Activated CD8-positive, alpha-beta T cell treated with anti-CD3 and anti-CD28 coated beads, Interleukin-2, amount 10 ng/mL, durations not matched to agents 7 days and 5 days (primary cell): ENCODE measurements at regions of chr17 and their contacts with region 1.

Region 1: DNA sequence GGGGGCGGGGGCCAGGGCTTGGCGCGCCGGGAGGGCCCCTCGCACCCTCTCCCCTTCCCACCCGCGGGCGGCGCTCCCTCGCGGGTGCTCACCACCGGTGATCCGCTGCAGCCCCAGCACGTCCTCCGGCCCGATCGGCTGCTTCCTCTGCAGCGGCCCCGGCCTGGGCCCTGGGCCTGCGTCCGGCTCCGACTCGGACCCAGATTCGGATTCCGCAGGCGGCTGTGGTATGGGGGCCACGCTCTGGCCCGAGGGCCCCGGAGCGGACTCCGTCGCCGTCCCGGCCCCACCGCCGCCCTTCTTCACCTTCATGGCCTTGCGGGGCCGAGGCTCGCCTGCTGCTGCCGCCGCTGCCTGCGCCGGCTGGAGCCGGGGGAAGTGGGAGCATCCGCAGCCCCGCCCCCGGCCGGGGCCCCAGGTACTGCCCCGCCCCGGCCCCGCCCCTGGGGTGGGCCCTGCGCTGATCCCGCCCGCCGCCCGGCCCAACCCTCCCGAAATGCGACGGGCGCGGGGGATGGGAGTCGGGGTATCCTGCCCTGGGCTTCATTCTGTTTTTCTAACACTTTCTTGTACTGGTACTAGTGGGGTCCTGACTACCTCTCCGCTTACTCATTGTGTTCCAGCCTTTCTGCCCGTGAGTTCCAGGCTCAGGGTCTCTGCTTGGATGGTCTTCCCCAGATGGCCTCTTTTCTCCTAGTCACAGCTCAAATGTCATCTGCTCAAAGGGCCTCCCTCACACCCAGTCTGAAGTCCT is at the start of gene UNC119:
- DNase-seq: peak; percentile 82
- ATAC-seq: peak; percentile 85
- H3K4me3 Mint-ChIP-seq: peak within 1 kb of the TSS; percentile 91
- H3K27ac Mint-ChIP-seq: peak within 1 kb of the TSS; percentile 90
- H3K4me1 Mint-ChIP-seq: peaks cover 48% of the 10 kb centered on the region
- H3K27me3 Mint-ChIP-seq: no peaks in the 10 kb centered on the region
- total RNA-seq, gene UNC119: 41.6 to 48.1 TPM

Region 2: DNA sequence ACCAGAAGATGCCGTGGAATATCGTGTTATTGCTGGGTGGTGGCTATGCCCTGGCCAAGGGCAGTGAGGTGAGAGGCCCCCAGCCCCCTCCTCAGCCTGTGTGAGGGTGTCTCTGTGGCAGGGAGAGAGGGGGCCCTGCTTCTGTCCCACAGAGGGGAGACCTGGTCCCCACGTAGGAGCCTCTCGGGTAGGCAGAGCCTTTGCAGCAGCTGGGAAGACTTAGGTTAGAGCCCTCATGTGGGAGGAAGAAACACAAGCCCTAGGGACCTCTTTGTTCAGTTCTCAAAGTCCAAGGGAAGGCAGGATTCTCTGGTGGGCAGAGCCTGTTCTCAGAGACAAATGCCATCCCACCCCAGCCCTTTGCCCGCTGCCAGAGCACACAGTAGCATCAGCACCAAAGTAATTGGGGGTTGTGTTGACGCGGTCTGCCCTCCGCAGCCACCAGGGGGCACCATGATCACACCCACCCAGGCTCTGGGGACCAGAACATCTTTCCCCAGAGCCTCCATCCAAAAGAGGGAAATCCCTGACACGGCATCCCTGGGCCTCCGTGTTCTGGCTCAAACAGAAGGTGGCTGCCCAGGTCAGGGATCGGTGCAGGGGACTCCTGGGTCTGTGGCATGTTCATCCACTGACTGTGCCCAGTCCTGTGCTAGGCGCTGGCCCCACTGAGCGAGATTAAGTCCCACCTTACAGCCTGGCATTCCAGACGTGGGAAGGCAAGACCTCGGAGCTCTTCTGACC is 57.8 kb before region 1 on chr17:
- CTCF ChIA-PET with region 1: interaction called, 16 read pairs
- POLR2A ChIA-PET with region 1: no interaction called
- DNase-seq: peak; percentile 83
- ATAC-seq: peak; percentile 89
- H3K4me3 Mint-ChIP-seq: no peak overlapping the region
- H3K27ac Mint-ChIP-seq: no peak overlapping the region
- H3K4me1 Mint-ChIP-seq: no peaks in the 10 kb centered on the region
- H3K27me3 Mint-ChIP-seq: peaks cover 2% of the 10 kb centered on the region

Region 3: DNA sequence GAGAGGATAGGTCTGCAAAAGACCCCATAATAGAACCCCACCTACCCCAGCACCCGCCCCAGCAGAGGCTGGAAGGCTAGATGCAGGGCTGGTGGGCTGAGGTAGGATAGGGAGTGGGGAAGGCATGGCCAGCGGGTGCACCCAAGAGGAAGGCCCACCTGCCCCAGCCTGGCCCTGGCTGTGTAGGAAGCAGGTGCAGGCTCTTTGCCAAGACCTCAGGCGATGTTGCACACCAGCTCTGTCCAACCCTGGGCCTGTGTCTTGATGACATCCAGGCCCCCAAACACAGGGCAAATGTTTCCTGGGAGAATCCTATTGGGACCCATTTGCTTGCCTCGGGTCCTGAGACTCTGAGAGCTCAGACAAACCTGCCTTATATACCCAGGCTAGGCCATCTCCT is 12.2 kb before region 1 on chr17:
- CTCF ChIA-PET with region 1: interaction called, 21 read pairs
- POLR2A ChIA-PET with region 1: interaction called, 3 read pairs
- DNase-seq: no peak
- ATAC-seq: no peak
- H3K4me3 Mint-ChIP-seq: no peak overlapping the region
- H3K27ac Mint-ChIP-seq: no peak overlapping the region
- H3K4me1 Mint-ChIP-seq: no peaks in the 10 kb centered on the region
- H3K27me3 Mint-ChIP-seq: no peaks in the 10 kb centered on the region

Region 4: GRCh38 chr17:28571255-28572122 is 19.1 kb after region 1 on chr17 and contains the start of gene PIGS:
- CTCF ChIA-PET with region 1: interaction called, 46 read pairs
- POLR2A ChIA-PET with region 1: interaction called, 30 read pairs
- DNase-seq: peak; percentile 94
- ATAC-seq: peak; percentile 98
- H3K4me3 Mint-ChIP-seq: peak within 1 kb of the TSS; percentile 94
- H3K27ac Mint-ChIP-seq: peak within 1 kb of the TSS; percentile 95
- H3K4me1 Mint-ChIP-seq: peaks cover 58% of the 10 kb centered on the region
- H3K27me3 Mint-ChIP-seq: no peaks in the 10 kb centered on the region
- total RNA-seq, gene PIGS: 60.0 to 61.1 TPM

Region 5: GRCh38 chr17:28576758-28577465 is 24.5 kb after region 1 on chr17 and contains the start of gene ALDOC:
- CTCF ChIA-PET with region 1: interaction called, 46 read pairs
- POLR2A ChIA-PET with region 1: interaction called, 30 read pairs
- DNase-seq: peak; percentile 98
- ATAC-seq: peak; percentile 95
- H3K4me3 Mint-ChIP-seq: peak within 1 kb of the TSS; percentile 84
- H3K27ac Mint-ChIP-seq: peak within 1 kb of the TSS; percentile 86
- H3K4me1 Mint-ChIP-seq: peaks cover 47% of the 10 kb centered on the region
- H3K27me3 Mint-ChIP-seq: no peaks in the 10 kb centered on the region
- total RNA-seq, gene ALDOC: 97.3 to 99.7 TPM

Region 6: GRCh38 chr17:28598799-28599310 is 46.4 kb after region 1 on chr17 and contains the start of gene SPAG5:
- CTCF ChIA-PET with region 1: no interaction called
- POLR2A ChIA-PET with region 1: interaction called, 19 read pairs
- DNase-seq: peak; percentile 96
- ATAC-seq: peak; percentile 95
- H3K4me3 Mint-ChIP-seq: peak within 1 kb of the TSS; percentile 84
- H3K27ac Mint-ChIP-seq: peak within 1 kb of the TSS; percentile 91
- H3K4me1 Mint-ChIP-seq: peaks cover 20% of the 10 kb centered on the region
- H3K27me3 Mint-ChIP-seq: no peaks in the 10 kb centered on the region
- total RNA-seq, gene SPAG5: 162 to 170 TPM

Region 7: GRCh38 chr17:28612936-28613872 is 60.8 kb after region 1 on chr17:
- CTCF ChIA-PET with region 1: interaction called, 11 read pairs
- POLR2A ChIA-PET with region 1: no interaction called
- DNase-seq: peak; percentile 39
- ATAC-seq: peak; percentile 69
- H3K4me3 Mint-ChIP-seq: no peak overlapping the region
- H3K27ac Mint-ChIP-seq: no peak overlapping the region
- H3K4me1 Mint-ChIP-seq: peaks cover 3% of the 10 kb centered on the region
- H3K27me3 Mint-ChIP-seq: no peaks in the 10 kb centered on the region

Region 8: DNA sequence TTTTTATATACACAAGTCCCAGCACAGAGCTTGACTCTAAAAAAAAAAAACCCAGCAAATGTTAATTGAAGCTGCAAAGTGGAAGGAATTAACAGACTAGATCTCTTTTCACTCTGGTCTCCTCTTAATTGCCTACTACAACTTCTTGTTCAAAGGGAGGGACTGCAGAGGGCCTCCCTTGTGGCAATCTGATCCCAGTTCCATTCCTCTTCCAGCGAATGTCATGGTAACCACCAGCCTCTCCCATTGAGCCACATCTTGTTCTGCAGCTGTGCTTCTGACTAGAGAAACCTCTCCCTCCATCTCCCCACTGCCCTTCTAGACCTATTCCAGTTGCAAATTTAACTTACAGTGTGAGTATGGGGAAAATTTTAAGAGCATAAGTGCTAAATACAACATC is 115.4 kb after region 1 on chr17:
- CTCF ChIA-PET with region 1: no interaction called
- POLR2A ChIA-PET with region 1: no interaction called
- DNase-seq: no peak
- ATAC-seq: no peak
- H3K4me3 Mint-ChIP-seq: no peak overlapping the region
- H3K27ac Mint-ChIP-seq: no peak overlapping the region
- H3K4me1 Mint-ChIP-seq: peaks cover 34% of the 10 kb centered on the region
- H3K27me3 Mint-ChIP-seq: no peaks in the 10 kb centered on the region